ENCODE measurements at regions of chr9 and their contacts with region 1.

Region 1: GRCh38 chr9:105414947-105415661 is 32.7 kb upstream of the FSD1L start:
- DNase-seq: peak in 4 of 6 donors; percentile 18 to 58 (median 34)
- ATAC-seq: peak; percentile 64 to 96 (median 90)
- H3K4me3 ChIP-seq: no peak overlapping the region
- H3K27ac ChIP-seq: no peak overlapping the region
- H3K4me1 ChIP-seq: peaks cover 0 to 4% (median 0%) of the 10 kb centered on the region in 3 donors
- H3K27me3 ChIP-seq: no peaks in the 10 kb centered on the region
- CTCF ChIP-seq: peak; percentile 65 to 73 (median 70)

Region 2: DNA sequence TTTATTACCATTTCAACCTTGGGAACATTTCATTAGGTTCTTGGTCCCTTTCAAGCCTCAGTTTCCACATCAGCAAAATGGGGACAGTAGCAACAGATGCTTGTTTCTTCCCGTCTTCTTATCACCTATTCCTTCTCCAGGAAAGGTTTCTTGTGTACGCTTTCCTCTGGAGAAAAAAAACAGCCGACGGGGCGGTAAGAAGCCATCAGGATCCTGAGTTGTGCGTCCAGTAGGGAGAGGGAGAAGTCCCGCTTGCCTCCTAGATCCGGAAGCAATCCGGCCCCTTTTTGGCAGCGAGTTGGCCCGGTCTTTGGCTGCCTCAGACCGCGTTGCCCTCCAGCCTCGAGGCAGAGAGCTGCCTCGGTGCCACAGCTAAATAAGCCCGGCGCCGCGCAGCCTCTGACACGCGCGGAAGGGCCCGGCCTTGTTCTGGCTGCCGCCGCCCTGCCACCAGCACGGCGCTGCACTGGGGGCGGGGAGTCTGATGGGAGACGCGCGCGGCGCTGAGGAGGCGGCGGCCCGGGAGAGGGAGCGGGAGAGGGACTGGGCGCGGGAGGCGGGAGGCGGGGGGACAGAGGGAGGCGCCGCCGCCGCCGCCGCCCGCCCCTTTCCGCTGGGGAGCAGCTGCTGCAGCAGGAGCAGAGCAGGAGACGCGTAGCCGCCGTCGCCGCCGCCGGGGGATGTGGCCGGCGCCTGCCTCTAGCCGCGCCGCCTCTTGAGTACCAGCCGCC is 170.9 kb before region 1 on chr9 and contains the start of gene SLC44A1:
- intact Hi-C with region 1: loop called in 1 of 3 experiments (anchors 10 kb)
- DNase-seq: peak; percentile 97 to 98 (median 98)
- ATAC-seq: peak; percentile 90 to 96 (median 92)
- H3K4me3 ChIP-seq: peak within 1 kb of the TSS; percentile 57 to 86 (median 66)
- H3K27ac ChIP-seq: peak within 1 kb of the TSS; percentile 84 to 95 (median 92)
- H3K4me1 ChIP-seq: peaks cover 0 to 15% (median 0%) of the 10 kb centered on the region in 3 donors
- H3K27me3 ChIP-seq: no peaks in the 10 kb centered on the region
- CTCF ChIP-seq: no peak
- total RNA-seq, gene SLC44A1: 18.6 to 32.3 (median 20.5) TPM